ENCODE measurements at regions of chr6 and their contacts with region 1.

Region 1: GRCh38 chr6:120960761-120961160 is 373.5 kb downstream of the TBC1D32 start:
- DNase-seq: no peak
- H3K4me3 ChIP-seq: no peak overlapping the region
- H3K27ac ChIP-seq: no peak overlapping the region
- H3K4me1 ChIP-seq: no peaks in the 10 kb centered on the region
- H3K27me3 ChIP-seq: no peaks in the 10 kb centered on the region
- CTCF ChIP-seq: no peak

Region 2: DNA sequence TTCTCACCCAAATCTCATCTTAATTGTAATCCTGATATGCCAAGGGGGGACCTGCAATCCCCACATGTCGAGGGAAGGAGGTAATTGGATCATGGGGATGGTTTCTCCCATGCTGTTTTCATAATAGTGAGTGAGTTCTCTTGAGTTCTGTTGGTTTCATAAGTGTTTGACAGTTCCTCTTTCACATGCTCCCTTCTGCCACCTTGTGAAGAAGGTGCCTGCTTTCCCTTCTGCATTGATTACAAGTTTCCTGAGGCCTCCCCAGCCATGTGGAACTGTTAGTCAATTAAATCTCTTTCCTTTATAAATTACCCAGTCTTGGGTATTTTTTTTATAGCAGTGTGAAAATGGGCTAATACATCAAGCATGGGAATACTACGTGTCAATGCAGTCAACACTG is 686.2 kb before region 1 on chr6:
- CTCF ChIA-PET with region 1: no interaction called
- POLR2A ChIA-PET with region 1: no interaction called
- intact Hi-C with region 1: no loop called
- DNase-seq: no peak
- H3K4me3 ChIP-seq: no peak overlapping the region
- H3K27ac ChIP-seq: no peak overlapping the region
- H3K4me1 ChIP-seq: no peaks in the 10 kb centered on the region
- H3K27me3 ChIP-seq: no peaks in the 10 kb centered on the region
- CTCF ChIP-seq: no peak

Region 3: GRCh38 chr6:121354764-121355163 is 394.0 kb after region 1 on chr6:
- CTCF ChIA-PET with region 1: no interaction called
- POLR2A ChIA-PET with region 1: no interaction called
- intact Hi-C with region 1: no loop called
- DNase-seq: no peak
- H3K4me3 ChIP-seq: no peak overlapping the region
- H3K27ac ChIP-seq: no peak overlapping the region
- H3K4me1 ChIP-seq: no peaks in the 10 kb centered on the region
- H3K27me3 ChIP-seq: no peaks in the 10 kb centered on the region
- CTCF ChIP-seq: peak; percentile 53

Region 4: DNA sequence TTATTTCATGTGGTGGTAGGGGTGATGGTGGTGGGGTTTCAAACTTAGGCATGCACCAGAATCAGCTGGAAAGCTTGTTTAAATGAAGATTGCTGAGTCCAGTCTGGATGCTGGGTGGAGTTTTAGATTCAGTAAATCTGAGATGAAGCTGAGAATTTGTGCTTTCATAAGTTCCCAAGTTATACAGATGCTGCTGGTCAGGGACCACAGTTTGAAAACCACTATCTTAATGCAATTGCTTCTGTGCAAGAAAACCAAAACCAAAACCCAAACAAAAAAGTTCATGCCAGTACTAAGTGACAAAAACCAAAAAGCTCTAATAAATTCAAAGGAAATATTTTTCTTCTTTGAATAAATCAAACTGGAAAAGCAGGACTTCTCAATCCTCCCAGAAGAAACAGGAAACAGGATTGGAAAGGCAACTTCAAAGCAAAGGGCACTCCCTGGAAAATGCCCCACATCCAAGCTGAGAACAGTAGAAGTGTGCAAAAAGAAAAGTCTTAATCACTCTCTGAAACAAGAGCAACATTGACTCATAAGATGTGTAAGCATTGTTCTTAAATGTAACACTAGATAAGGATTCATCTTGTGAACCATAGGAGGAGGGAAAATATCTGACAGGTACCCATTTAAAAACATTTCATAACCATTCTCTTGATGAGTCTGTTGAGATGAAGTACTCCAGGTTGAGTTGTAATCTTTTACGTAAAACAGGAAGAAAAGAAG is 957.2 kb after region 1 on chr6:
- CTCF ChIA-PET with region 1: no interaction called
- POLR2A ChIA-PET with region 1: interaction called, 14 read pairs
- intact Hi-C with region 1: no loop called
- DNase-seq: no peak
- H3K4me3 ChIP-seq: no peak overlapping the region
- H3K27ac ChIP-seq: no peak overlapping the region
- H3K4me1 ChIP-seq: no peaks in the 10 kb centered on the region
- H3K27me3 ChIP-seq: no peaks in the 10 kb centered on the region
- CTCF ChIP-seq: no peak